IMR-90 (cell line): ENCODE measurements at regions of chr17 and their contacts with region 1.

Region 1: DNA sequence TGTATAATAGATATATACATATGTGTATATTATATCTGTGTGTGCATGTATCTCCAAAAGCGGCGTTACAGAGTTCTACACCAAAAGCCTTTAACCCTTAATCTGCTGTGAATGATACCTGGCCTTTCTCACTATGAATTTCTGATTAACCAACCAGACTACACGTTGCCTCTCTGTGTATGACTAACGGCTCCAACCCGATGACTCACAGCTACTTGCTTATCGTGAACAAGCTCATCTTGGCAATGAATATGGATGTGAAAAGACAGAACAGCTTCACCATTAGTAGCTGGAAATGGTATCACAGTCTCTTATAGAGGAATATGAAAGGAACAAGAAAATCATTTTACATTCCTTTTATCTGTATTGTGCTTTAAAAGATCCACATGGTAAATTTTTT is 23.8 kb upstream of the ARHGAP44 start:
- DNase-seq: peak; percentile 96
- ATAC-seq: peak; percentile 96
- H3K4me3 ChIP-seq: no peak overlapping the region
- H3K27ac ChIP-seq: no peak overlapping the region
- H3K4me1 ChIP-seq: no peaks in the 10 kb centered on the region
- H3K27me3 ChIP-seq: no peaks in the 10 kb centered on the region
- CTCF ChIP-seq: no peak
- POLR2A ChIP-seq: no peak
- RAD21 ChIP-seq: no peak

Region 2: GRCh38 chr17:12719948-12720347 is 45.6 kb before region 1 on chr17:
- CTCF ChIA-PET with region 1: no interaction called
- POLR2A ChIA-PET with region 1: interaction called, 20 read pairs
- dilution Hi-C with region 1: no loop called
- in situ Hi-C with region 1: no loop called
- intact Hi-C with region 1: no loop called
- DNase-seq: no peak
- ATAC-seq: no peak
- H3K4me3 ChIP-seq: no peak overlapping the region
- H3K27ac ChIP-seq: no peak overlapping the region
- H3K4me1 ChIP-seq: peaks cover 4% of the 10 kb centered on the region; the same call in 1 of the 2 replicates
- H3K27me3 ChIP-seq: no peaks in the 10 kb centered on the region
- CTCF ChIP-seq: no peak
- POLR2A ChIP-seq: no peak
- RAD21 ChIP-seq: no peak

Region 3: GRCh38 chr17:12730931-12731521 is 34.5 kb before region 1 on chr17:
- CTCF ChIA-PET with region 1: no interaction called
- POLR2A ChIA-PET with region 1: no interaction called
- dilution Hi-C with region 1: no loop called
- in situ Hi-C with region 1: no loop called
- intact Hi-C with region 1: no loop called
- DNase-seq: peak; percentile 78
- ATAC-seq: peak; percentile 79
- H3K4me3 ChIP-seq: no peak overlapping the region
- H3K27ac ChIP-seq: peak overlapping the region; percentile 33; the same call in 1 of the 2 replicates
- H3K4me1 ChIP-seq: peaks cover 22% of the 10 kb centered on the region
- H3K27me3 ChIP-seq: no peaks in the 10 kb centered on the region
- CTCF ChIP-seq: no peak
- POLR2A ChIP-seq: no peak
- RAD21 ChIP-seq: no peak